A549 (cell line): ENCODE measurements at regions of chr1 and their contacts with region 1.

Region 1: GRCh38 chr1:233379869-233380438 is 52.4 kb downstream of the MAP3K21 start:
- DNase-seq: no peak
- ATAC-seq: no peak
- H3K4me3 ChIP-seq: no peak overlapping the region
- H3K27ac ChIP-seq: no peak overlapping the region
- H3K4me1 ChIP-seq: 0 out of 3 replicates have a peak, but pooled peaks cover 4% of the 10 kb centered on the region
- CTCF ChIP-seq: no peak
- EP300 ChIP-seq: no peak
- POLR2A ChIP-seq: no peak
- RAD21 ChIP-seq: no peak

Region 2: DNA sequence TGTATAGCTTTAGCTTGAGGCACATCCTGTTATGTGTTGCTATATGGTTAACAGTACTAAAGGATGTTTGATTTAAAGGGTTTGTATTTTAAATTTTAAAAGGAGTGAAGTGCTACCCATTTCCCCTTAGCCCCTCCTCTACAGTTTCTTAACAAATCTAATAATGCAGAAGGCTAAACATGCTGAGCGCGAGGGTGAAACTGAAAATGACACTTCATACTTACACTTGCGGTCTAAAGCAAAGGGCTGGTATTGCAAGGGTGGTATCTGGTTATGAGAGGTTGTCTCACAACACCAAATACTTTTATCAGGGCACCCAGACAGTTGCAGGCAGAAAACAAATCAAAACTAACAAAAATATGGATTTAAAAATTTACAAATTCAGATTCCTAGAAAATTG is 922.4 kb before region 1 on chr1:
- CTCF ChIA-PET with region 1: no interaction called
- POLR2A ChIA-PET with region 1: no interaction called
- DNase-seq: no peak
- ATAC-seq: no peak
- H3K4me3 ChIP-seq: no peak overlapping the region
- H3K27ac ChIP-seq: no peak overlapping the region
- H3K4me1 ChIP-seq: no peaks in the 10 kb centered on the region
- CTCF ChIP-seq: no peak
- EP300 ChIP-seq: no peak
- POLR2A ChIP-seq: no peak
- RAD21 ChIP-seq: no peak

Region 3: GRCh38 chr1:233349137-233349536 is 30.8 kb before region 1 on chr1:
- CTCF ChIA-PET with region 1: no interaction called
- POLR2A ChIA-PET with region 1: no interaction called
- DNase-seq: no peak
- ATAC-seq: no peak
- H3K4me3 ChIP-seq: no peak overlapping the region
- H3K27ac ChIP-seq: no peak overlapping the region
- H3K4me1 ChIP-seq: peaks cover 13% of the 10 kb centered on the region; the same call in 2 of the 3 replicates
- CTCF ChIP-seq: no peak
- EP300 ChIP-seq: no peak
- POLR2A ChIP-seq: no peak
- RAD21 ChIP-seq: no peak

Region 4: GRCh38 chr1:233394860-233395717 is 15.1 kb after region 1 on chr1:
- CTCF ChIA-PET with region 1: interaction called, 33 read pairs
- POLR2A ChIA-PET with region 1: no interaction called
- DNase-seq: peak; percentile 61 to 70
- ATAC-seq: peak; percentile 96 to 97
- H3K4me3 ChIP-seq: no peak overlapping the region
- H3K27ac ChIP-seq: peak overlapping the region in 1 of 2 experiments; percentile 62; a peak in 2 of 6 replicates
- H3K4me1 ChIP-seq: peaks cover 13% of the 10 kb centered on the region
- CTCF ChIP-seq: peak; percentile 92
- EP300 ChIP-seq: no peak
- POLR2A ChIP-seq: no peak
- RAD21 ChIP-seq: peak; percentile 91 to 92

Region 5: DNA sequence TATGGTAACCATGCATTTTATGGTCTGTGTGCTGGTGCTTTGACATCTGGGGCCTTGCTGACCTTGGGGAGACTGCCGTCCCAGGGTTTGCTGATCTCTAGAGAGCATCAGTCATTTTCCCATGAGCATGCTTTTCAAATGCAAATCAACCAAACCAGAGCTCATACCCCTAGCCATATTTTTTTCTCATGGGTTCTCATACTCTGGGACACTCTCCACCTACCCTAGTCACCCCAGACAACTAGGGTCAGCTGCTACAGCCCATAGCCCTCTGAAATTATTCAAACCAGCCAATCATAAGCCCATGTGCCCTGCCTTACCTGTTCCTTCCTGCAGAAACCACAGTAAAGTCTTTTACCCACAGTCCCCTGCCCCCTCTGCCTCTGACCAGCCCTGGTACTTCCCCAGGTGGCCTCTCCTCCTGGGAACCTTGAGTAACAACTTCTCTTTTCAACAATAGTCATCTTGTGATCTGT is 79.6 kb after region 1 on chr1:
- CTCF ChIA-PET with region 1: no interaction called
- POLR2A ChIA-PET with region 1: no interaction called
- DNase-seq: no peak
- ATAC-seq: no peak
- H3K4me3 ChIP-seq: no peak overlapping the region
- H3K27ac ChIP-seq: no peak overlapping the region
- H3K4me1 ChIP-seq: no peaks in the 10 kb centered on the region
- CTCF ChIP-seq: no peak
- EP300 ChIP-seq: no peak
- POLR2A ChIP-seq: no peak
- RAD21 ChIP-seq: no peak

Region 6: GRCh38 chr1:233512538-233512937 is 132.6 kb after region 1 on chr1:
- CTCF ChIA-PET with region 1: no interaction called
- POLR2A ChIA-PET with region 1: no interaction called
- DNase-seq: no peak
- ATAC-seq: no peak
- H3K4me3 ChIP-seq: no peak overlapping the region
- H3K27ac ChIP-seq: no peak overlapping the region
- H3K4me1 ChIP-seq: no peaks in the 10 kb centered on the region
- CTCF ChIP-seq: no peak
- EP300 ChIP-seq: no peak
- POLR2A ChIP-seq: no peak
- RAD21 ChIP-seq: no peak